ENCODE measurements at regions of chr7 and their contacts with region 1.

Region 1: DNA sequence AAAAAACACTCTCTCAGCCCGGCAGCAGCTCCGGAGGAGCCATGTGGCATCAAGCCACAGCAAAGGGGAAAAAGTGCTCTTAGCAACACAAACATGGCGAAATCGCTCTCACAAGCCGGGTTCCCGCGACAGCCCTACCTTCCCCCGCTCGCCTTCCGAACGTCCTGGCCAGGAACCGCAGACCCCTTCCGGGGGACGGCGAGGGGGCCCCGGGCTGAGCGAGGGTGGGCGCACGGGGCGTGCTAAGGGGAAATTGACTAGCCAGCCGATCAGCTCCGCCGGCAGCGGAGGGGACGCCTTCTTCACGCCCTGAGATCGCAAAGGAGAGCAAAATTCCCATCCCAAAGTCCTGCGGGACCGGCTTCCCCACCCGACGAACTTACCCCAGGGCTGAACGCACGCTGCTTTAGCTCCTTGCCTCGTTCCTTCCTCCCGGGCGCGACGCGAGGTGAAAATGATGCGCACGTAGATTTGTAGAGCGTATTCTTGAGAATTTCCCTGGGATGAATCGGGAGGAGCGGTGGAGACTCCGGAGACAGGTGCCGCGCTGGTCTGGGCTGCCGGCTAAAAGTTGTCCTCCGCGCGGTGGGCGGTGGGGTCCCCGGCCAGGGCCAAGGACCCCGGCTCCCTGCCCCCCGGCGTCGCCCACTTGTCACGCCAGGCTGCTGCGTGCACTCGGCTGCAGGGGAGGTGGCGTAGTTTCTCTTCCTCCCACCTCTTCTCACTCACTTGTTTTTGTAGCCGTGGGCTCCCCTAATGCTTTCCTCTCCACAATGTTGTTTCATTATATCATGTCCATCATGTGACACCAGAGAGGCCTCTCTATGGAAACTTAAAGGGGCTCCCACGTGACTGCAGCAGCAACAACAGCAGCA is 220.1 kb upstream of the MKLN1 start:
- DNase-seq: peak; percentile 58 to 85
- H3K4me3 ChIP-seq: peak overlapping the region; percentile 73
- H3K27ac ChIP-seq: peak overlapping the region; percentile 90
- H3K4me1 ChIP-seq: peaks cover 36% of the 10 kb centered on the region
- H3K27me3 ChIP-seq: no peaks in the 10 kb centered on the region
- CTCF ChIP-seq: no peak

Region 2: GRCh38 chr7:130904031-130904757 is 203.4 kb before region 1 on chr7:
- CTCF ChIA-PET with region 1: no interaction called
- POLR2A ChIA-PET with region 1: interaction called, 6 read pairs
- intact Hi-C with region 1: loop called (anchors 2 kb)
- DNase-seq: peak; percentile 81 to 99
- H3K4me3 ChIP-seq: peak overlapping the region; percentile 96; the same call in 1 of the 2 replicates
- H3K27ac ChIP-seq: peak overlapping the region; percentile 99
- H3K4me1 ChIP-seq: peaks cover 97% of the 10 kb centered on the region
- H3K27me3 ChIP-seq: no peaks in the 10 kb centered on the region
- CTCF ChIP-seq: no peak

Region 3: DNA sequence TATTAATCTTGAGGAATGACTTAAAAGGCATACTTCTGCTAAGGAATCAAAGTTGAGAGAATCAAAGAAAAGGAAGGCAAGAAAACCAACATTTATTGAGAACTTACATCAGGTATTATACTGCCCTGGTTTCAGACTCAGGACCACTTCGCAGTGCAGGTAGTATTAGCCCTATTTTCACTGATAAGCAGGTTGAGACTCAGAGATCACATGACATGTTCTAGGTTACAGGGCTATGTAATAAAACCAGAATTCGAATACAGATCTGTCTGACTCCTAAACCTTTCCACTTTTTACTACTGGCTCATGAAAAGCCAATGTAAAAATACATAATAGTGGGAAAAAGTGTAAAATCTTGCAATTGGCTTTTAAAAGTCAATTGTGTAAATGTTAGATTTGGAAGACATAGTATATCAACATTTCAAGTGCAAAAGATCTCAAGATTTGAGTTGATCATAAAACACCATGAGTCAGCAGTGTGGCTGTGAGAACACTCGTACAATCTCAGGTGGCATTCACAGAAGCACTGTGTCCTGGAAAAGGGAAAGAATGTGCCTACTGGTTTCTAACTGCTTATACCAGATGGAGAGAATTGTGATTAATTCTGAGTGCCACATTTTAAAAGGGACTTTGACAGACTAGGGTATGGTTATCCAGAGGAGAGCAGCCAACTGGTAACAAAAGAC is 24.3 kb after region 1 on chr7:
- CTCF ChIA-PET with region 1: no interaction called
- POLR2A ChIA-PET with region 1: interaction called, 11 read pairs
- intact Hi-C with region 1: no loop called
- DNase-seq: no peak
- H3K4me3 ChIP-seq: no peak overlapping the region
- H3K27ac ChIP-seq: no peak overlapping the region
- H3K4me1 ChIP-seq: peaks cover 19% of the 10 kb centered on the region
- H3K27me3 ChIP-seq: no peaks in the 10 kb centered on the region
- CTCF ChIP-seq: no peak

Region 4: DNA sequence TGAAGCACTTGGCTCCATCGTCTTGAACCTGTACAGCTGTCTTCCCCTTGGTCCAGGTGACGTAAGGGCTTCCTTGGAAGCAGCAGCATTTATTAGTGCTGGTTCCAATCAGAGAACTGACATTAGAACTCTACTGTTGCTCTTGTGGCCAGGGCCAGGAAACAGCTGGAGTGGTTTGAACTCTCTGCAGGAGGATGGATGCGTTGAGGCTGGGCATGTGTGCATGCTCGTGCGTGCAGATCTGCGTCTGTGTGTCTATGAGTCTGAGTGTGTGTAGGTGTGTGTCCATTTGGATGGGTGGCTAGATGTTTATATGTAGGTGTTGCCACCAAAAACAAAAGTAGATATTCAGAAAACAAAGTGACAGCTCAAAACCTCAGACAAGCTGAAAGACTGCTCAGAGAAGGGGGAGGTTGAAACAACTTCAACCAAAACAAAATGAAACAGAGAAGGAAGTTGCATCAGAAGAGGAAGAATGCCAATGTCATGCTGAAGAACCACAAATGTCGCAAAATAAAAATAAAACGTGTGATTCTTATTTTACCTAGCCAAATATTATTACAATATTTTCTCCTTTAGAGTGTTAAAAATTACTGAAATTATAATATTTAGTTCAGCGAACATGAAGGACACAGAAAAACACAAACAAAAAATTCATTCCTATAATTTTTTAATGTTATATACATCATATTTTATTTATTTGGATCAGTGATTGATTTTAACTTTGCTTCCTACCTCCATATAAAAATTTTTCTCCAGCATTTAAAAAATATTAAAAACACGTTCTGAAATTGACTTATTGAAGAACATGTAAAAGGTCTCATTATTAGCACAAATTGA is 124.0 kb after region 1 on chr7:
- CTCF ChIA-PET with region 1: no interaction called
- POLR2A ChIA-PET with region 1: no interaction called
- intact Hi-C with region 1: loop called (anchors 2 kb)
- DNase-seq: no peak
- H3K4me3 ChIP-seq: no peak overlapping the region
- H3K27ac ChIP-seq: peak overlapping the region; percentile 33; the same call in 1 of the 2 replicates
- H3K4me1 ChIP-seq: peaks cover 21% of the 10 kb centered on the region
- H3K27me3 ChIP-seq: no peaks in the 10 kb centered on the region
- CTCF ChIP-seq: no peak

Region 5: GRCh38 chr7:131302876-131303707 is 195.5 kb after region 1 on chr7:
- CTCF ChIA-PET with region 1: no interaction called
- POLR2A ChIA-PET with region 1: interaction called, 5 read pairs
- intact Hi-C with region 1: loop called (anchors 1 kb)
- DNase-seq: peak in 1 of 2 experiments; percentile 38
- H3K4me3 ChIP-seq: no peak overlapping the region
- H3K27ac ChIP-seq: no peak overlapping the region
- H3K4me1 ChIP-seq: peaks cover 11% of the 10 kb centered on the region
- H3K27me3 ChIP-seq: no peaks in the 10 kb centered on the region
- CTCF ChIP-seq: peak; percentile 70

Region 6: GRCh38 chr7:131370523-131370968 is 263.0 kb after region 1 on chr7:
- CTCF ChIA-PET with region 1: no interaction called
- POLR2A ChIA-PET with region 1: no interaction called
- intact Hi-C with region 1: loop called (anchors 1 kb)
- DNase-seq: peak; percentile 57 to 68
- H3K4me3 ChIP-seq: no peak overlapping the region
- H3K27ac ChIP-seq: peak overlapping the region; percentile 43
- H3K4me1 ChIP-seq: peaks cover 29% of the 10 kb centered on the region
- H3K27me3 ChIP-seq: no peaks in the 10 kb centered on the region
- CTCF ChIP-seq: no peak